IMR-90 (cell line): ENCODE measurements at regions of chr4 and their contacts with region 1.

Region 1: GRCh38 chr4:137819964-137820383 is 287.7 kb upstream of the PCDH18 start:
- DNase-seq: peak; percentile 65
- ATAC-seq: peak; percentile 91
- H3K4me3 ChIP-seq: no peak overlapping the region
- H3K27ac ChIP-seq: no peak overlapping the region
- H3K4me1 ChIP-seq: no peaks in the 10 kb centered on the region
- H3K27me3 ChIP-seq: no peaks in the 10 kb centered on the region
- CTCF ChIP-seq: peak; percentile 74
- POLR2A ChIP-seq: no peak
- RAD21 ChIP-seq: peak; percentile 88

Region 2: DNA sequence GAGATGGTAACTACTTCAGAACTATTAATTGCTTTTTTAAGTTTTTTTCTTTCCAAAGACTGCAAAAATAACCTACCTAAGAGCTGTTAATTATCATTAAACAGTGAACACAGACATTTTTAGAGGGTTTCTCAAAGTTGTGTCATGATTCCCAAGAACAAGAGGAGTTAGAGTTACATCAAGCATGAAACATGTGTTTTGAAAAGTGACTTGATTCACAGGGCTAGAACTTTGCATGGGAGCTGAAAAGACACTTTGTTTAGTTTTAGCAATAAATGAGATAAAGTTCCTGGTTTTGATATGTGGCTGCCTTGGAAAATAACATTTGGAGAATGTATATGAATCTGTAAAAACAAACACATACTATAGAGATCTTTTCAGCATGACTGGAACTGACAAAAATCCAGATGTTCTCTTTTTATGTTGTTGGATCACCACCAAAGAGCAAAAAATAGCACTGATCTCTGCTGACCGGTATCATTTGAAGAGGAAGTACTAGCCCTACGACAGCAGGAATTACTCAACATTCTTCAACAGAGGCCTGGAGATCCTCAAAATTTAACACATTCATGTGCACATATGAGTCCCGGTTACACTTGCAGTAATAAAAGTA is 114.7 kb before region 1 on chr4:
- CTCF ChIA-PET with region 1: no interaction called
- POLR2A ChIA-PET with region 1: no interaction called
- dilution Hi-C with region 1: no loop called
- in situ Hi-C with region 1: no loop called
- intact Hi-C with region 1: loop called (anchors 5 kb)
- DNase-seq: peak; percentile 97
- ATAC-seq: peak; percentile 90
- H3K4me3 ChIP-seq: no peak overlapping the region
- H3K27ac ChIP-seq: peak overlapping the region; percentile 93; the same call in 1 of the 2 replicates
- H3K4me1 ChIP-seq: peaks cover 15% of the 10 kb centered on the region
- H3K27me3 ChIP-seq: no peaks in the 10 kb centered on the region
- CTCF ChIP-seq: no peak
- POLR2A ChIP-seq: no peak
- RAD21 ChIP-seq: no peak

Region 3: GRCh38 chr4:138090150-138090917 is 270.4 kb after region 1 on chr4:
- CTCF ChIA-PET with region 1: interaction called, 3 read pairs
- POLR2A ChIA-PET with region 1: no interaction called
- dilution Hi-C with region 1: no loop called
- in situ Hi-C with region 1: no loop called
- intact Hi-C with region 1: loop called (anchors 1 kb)
- DNase-seq: peak; percentile 83
- ATAC-seq: peak; percentile 96
- H3K4me3 ChIP-seq: peak overlapping the region; percentile 34
- H3K27ac ChIP-seq: peak overlapping the region; percentile 57
- H3K4me1 ChIP-seq: 0 out of 2 replicates have a peak, but pooled peaks cover 2% of the 10 kb centered on the region
- H3K27me3 ChIP-seq: no peaks in the 10 kb centered on the region
- CTCF ChIP-seq: peak; percentile 87
- POLR2A ChIP-seq: no peak
- RAD21 ChIP-seq: peak; percentile 93

Region 4: DNA sequence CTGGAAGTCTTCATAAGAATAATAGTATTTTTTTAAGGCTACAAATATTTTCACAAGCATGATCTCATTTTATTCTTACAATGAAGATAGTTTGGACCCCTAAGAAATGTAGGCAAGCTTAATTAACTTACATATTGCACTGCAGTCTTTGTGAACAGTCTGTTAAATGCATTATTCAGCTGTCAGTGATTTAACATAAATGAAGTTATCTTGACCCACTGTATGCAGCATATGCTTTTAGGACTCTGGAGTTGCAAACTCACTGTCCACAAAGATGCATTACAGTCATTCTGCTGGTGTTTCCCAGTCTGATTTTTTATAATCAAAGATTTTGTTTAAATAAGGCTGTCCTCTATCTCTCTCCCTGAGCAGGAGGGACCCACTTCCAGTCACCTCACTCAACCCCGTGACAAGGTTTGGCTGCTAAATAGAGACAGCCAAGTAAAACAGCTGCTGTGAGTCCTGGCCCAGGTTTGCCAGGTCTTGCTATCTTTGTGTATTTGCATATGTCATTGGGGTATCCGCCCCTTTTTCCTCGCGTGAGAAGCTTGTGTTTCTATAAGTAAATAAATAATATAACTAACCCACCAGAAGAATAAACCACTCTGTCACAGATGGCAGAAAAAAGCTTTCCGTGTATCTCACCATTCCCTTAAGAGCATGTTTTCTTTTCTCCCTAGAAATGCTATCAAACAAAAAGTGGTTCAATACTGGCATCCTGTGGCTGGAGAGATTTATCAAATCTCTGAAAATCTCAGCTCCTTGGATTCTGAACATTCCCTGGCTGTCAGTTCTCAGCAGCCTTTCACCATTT is 355.2 kb after region 1 on chr4:
- CTCF ChIA-PET with region 1: interaction called, 7 read pairs
- POLR2A ChIA-PET with region 1: no interaction called
- dilution Hi-C with region 1: no loop called
- in situ Hi-C with region 1: loop called (anchors 10 kb)
- intact Hi-C with region 1: no loop called
- DNase-seq: peak; percentile 61
- ATAC-seq: peak; percentile 67
- H3K4me3 ChIP-seq: no peak overlapping the region
- H3K27ac ChIP-seq: peak overlapping the region; percentile 2; the same call in 1 of the 2 replicates
- H3K4me1 ChIP-seq: peaks cover 3% of the 10 kb centered on the region
- H3K27me3 ChIP-seq: no peaks in the 10 kb centered on the region
- CTCF ChIP-seq: peak; percentile 40
- POLR2A ChIP-seq: no peak
- RAD21 ChIP-seq: peak; percentile 36

Region 5: DNA sequence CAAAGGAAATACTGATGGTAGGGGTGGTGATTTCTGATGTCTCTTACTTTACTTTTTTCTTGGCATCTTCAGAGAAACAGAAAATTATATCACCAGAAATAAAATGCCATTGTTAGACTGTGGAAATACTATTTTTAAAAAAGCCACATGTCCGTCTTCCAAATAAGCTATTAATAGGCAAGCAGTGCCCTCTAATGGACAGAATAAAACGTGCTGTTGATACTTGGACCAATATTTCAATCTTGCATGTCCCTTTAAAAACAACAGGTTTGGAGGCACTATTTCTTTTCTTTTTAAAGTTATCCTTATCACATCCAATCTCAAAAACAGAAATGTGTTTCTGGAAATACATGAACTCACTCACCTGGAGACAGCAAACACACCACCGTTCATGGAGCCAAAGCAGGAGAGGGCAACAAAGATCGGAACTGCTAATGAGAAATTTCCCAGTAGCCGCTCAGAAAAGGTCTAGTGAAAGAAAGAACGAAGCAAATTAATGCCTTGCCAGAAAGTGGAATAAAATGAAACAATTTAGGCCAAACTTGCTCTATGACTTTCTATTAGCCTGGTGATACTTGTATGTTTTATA is 363.0 kb after region 1 on chr4:
- CTCF ChIA-PET with region 1: interaction called, 4 read pairs
- POLR2A ChIA-PET with region 1: no interaction called
- dilution Hi-C with region 1: no loop called
- in situ Hi-C with region 1: loop called (anchors 10 kb)
- intact Hi-C with region 1: loop called (anchors 2 kb)
- DNase-seq: peak; percentile 72
- ATAC-seq: peak; percentile 31; the same call in 1 of the 2 replicates
- H3K4me3 ChIP-seq: no peak overlapping the region
- H3K27ac ChIP-seq: no peak overlapping the region
- H3K4me1 ChIP-seq: peaks cover 4% of the 10 kb centered on the region; the same call in 1 of the 2 replicates
- H3K27me3 ChIP-seq: no peaks in the 10 kb centered on the region
- CTCF ChIP-seq: peak; percentile 76
- POLR2A ChIP-seq: no peak
- RAD21 ChIP-seq: peak; percentile 76

Region 6: GRCh38 chr4:138576684-138577083 is 756.7 kb after region 1 on chr4:
- CTCF ChIA-PET with region 1: no interaction called
- POLR2A ChIA-PET with region 1: no interaction called
- dilution Hi-C with region 1: no loop called
- in situ Hi-C with region 1: no loop called
- intact Hi-C with region 1: loop called (anchors 2 kb)
- DNase-seq: peak; percentile 68
- ATAC-seq: peak; percentile 82
- H3K4me3 ChIP-seq: no peak overlapping the region
- H3K27ac ChIP-seq: no peak overlapping the region
- H3K4me1 ChIP-seq: no peaks in the 10 kb centered on the region
- H3K27me3 ChIP-seq: no peaks in the 10 kb centered on the region
- CTCF ChIP-seq: peak; percentile 55
- POLR2A ChIP-seq: no peak
- RAD21 ChIP-seq: peak; percentile 82